AG04450 (cell line): ENCODE measurements at regions of chr11 and their contacts with region 1.

Region 1: GRCh38 chr11:124961972-124962609 is 8.1 kb downstream of the CCDC15 start:
- DNase-seq: peak; percentile 74
- H3K4me3 ChIP-seq: no peak overlapping the region
- H3K27ac ChIP-seq: no peak overlapping the region
- H3K27me3 ChIP-seq: no peaks in the 10 kb centered on the region
- CTCF ChIP-seq: peak; percentile 79

Region 2: GRCh38 chr11:124950601-124951330 is 11.3 kb before region 1 on chr11:
- CTCF ChIA-PET with region 1: no interaction called
- POLR2A ChIA-PET with region 1: no interaction called
- DNase-seq: no peak
- H3K4me3 ChIP-seq: no peak overlapping the region
- H3K27ac ChIP-seq: no peak overlapping the region
- H3K27me3 ChIP-seq: no peaks in the 10 kb centered on the region
- CTCF ChIP-seq: no peak

Region 3: GRCh38 chr11:125429166-125429707 is 467.1 kb after region 1 on chr11:
- CTCF ChIA-PET with region 1: interaction called, 23 read pairs
- POLR2A ChIA-PET with region 1: no interaction called
- DNase-seq: no peak
- H3K4me3 ChIP-seq: no peak overlapping the region
- H3K27ac ChIP-seq: no peak overlapping the region
- H3K27me3 ChIP-seq: peaks cover 10% of the 10 kb centered on the region
- CTCF ChIP-seq: peak; percentile 79